CD4-positive, alpha-beta T cell (primary cell): ENCODE measurements at regions of chr3 and their contacts with region 1.

Region 1: GRCh38 chr3:46976326-46977190 is at the start of gene CCDC12:
- DNase-seq: peak; percentile 85 to 98 (median 89)
- ATAC-seq: peak; percentile 78
- H3K4me3 ChIP-seq: peak within 1 kb of the TSS; percentile 88
- H3K4me3 Mint-ChIP-seq: peak within 1 kb of the TSS; percentile 97
- H3K27ac ChIP-seq: peak within 1 kb of the TSS; percentile 84 to 95
- H3K27ac Mint-ChIP-seq: peak within 1 kb of the TSS; percentile 91
- H3K4me1 ChIP-seq: peaks cover 83% of the 10 kb centered on the region
- H3K4me1 Mint-ChIP-seq: peaks cover 74% of the 10 kb centered on the region
- H3K27me3 ChIP-seq: no peaks in the 10 kb centered on the region
- H3K27me3 Mint-ChIP-seq: no peaks in the 10 kb centered on the region
- CTCF ChIP-seq: no peak
- total RNA-seq, gene CCDC12: 57.5 to 59.5 TPM

Region 2: GRCh38 chr3:46947981-46948791 is 28.4 kb before region 1 on chr3:
- CTCF ChIA-PET with region 1: interaction called, 11 read pairs
- POLR2A ChIA-PET with region 1: interaction called, 10 read pairs
- intact Hi-C with region 1: loop called in 1 of 2 experiments (anchors 1 kb)
- DNase-seq: peak; percentile 51 to 94 (median 70)
- ATAC-seq: peak; percentile 77
- H3K4me3 ChIP-seq: peak overlapping the region; percentile 1
- H3K4me3 Mint-ChIP-seq: peak overlapping the region; percentile 59
- H3K27ac ChIP-seq: peak overlapping the region; percentile 64 to 86
- H3K27ac Mint-ChIP-seq: peak overlapping the region; percentile 92
- H3K4me1 ChIP-seq: peaks cover 93% of the 10 kb centered on the region
- H3K4me1 Mint-ChIP-seq: peaks cover 84% of the 10 kb centered on the region
- H3K27me3 ChIP-seq: no peaks in the 10 kb centered on the region
- H3K27me3 Mint-ChIP-seq: no peaks in the 10 kb centered on the region
- CTCF ChIP-seq: no peak

Region 3: GRCh38 chr3:46987743-46988401 is 11.3 kb after region 1 on chr3:
- CTCF ChIA-PET with region 1: no interaction called
- POLR2A ChIA-PET with region 1: interaction called, 22 read pairs
- intact Hi-C with region 1: loop called in 1 of 2 experiments (anchors 1 kb)
- DNase-seq: peak; percentile 79 to 96 (median 89)
- ATAC-seq: peak; percentile 98
- H3K4me3 ChIP-seq: peak overlapping the region; percentile 53
- H3K4me3 Mint-ChIP-seq: peak overlapping the region; percentile 87
- H3K27ac ChIP-seq: peak overlapping the region; percentile 59 to 64
- H3K27ac Mint-ChIP-seq: peak overlapping the region; percentile 93
- H3K4me1 ChIP-seq: peaks cover 86% of the 10 kb centered on the region
- H3K4me1 Mint-ChIP-seq: peaks cover 68% of the 10 kb centered on the region
- H3K27me3 ChIP-seq: no peaks in the 10 kb centered on the region
- H3K27me3 Mint-ChIP-seq: no peaks in the 10 kb centered on the region
- CTCF ChIP-seq: no peak

Region 4: GRCh38 chr3:47009225-47010110 is 32.9 kb after region 1 on chr3:
- CTCF ChIA-PET with region 1: no interaction called
- POLR2A ChIA-PET with region 1: interaction called, 15 read pairs
- intact Hi-C with region 1: no loop called
- DNase-seq: peak; percentile 30 to 85 (median 70)
- ATAC-seq: peak; percentile 88
- H3K4me3 ChIP-seq: peak overlapping the region; percentile 51
- H3K4me3 Mint-ChIP-seq: peak overlapping the region; percentile 71
- H3K27ac ChIP-seq: peak overlapping the region in 1 of 2 donors; percentile 50
- H3K27ac Mint-ChIP-seq: peak overlapping the region; percentile 59
- H3K4me1 ChIP-seq: peaks cover 10% of the 10 kb centered on the region
- H3K4me1 Mint-ChIP-seq: peaks cover 9% of the 10 kb centered on the region
- H3K27me3 ChIP-seq: no peaks in the 10 kb centered on the region
- H3K27me3 Mint-ChIP-seq: no peaks in the 10 kb centered on the region
- CTCF ChIP-seq: no peak

Region 5: DNA sequence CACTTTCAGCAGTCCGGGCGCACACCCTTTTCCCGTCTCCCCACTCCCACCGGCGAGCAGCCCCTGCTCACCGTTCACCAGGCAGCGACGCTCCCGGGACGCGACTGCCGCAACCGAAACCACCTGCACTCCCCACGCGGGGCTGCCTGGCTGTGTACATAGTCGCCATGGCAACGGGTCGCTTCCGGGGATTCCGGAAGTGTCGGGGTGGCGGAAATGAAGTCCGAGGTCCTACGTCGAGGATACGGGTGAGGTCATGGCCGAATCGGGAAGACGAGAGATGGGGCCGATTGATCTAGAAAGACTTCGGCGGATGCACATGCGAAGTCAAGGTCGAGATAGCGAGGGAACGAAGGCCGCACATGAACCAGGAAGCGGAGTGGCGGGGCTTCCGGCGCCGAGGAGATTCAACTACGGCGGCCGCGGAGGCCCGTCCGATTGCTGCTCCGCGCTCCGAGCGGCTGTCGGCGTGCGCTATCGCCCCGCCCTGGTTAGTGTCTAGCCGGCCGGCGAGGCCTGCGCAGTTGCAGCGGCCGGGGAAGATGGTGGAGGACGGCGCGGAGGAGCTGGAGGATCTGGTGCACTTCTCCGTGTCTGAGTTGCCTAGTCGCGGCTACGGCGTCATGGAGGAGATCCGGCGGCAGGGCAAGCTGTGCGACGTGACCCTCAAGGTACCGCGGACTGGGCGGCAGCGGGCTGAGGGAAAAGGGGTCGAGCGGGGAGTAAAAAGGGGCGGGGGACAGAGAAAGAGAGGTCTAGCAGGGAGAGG is 306.1 kb after region 1 on chr3 and contains the starts of genes KIF9 and KLHL18:
- CTCF ChIA-PET with region 1: no interaction called
- POLR2A ChIA-PET with region 1: no interaction called
- intact Hi-C with region 1: loop called in 1 of 2 experiments (anchors 5 kb)
- DNase-seq: peak; percentile 92 to 99 (median 95)
- ATAC-seq: peak; percentile 83
- H3K4me3 ChIP-seq: peak within 1 kb of the TSS; percentile 78
- H3K4me3 Mint-ChIP-seq: peak within 1 kb of the TSS; percentile 98
- H3K27ac ChIP-seq: peak within 1 kb of the TSS; percentile 95 to 98
- H3K27ac Mint-ChIP-seq: peak within 1 kb of the TSS; percentile 99
- H3K4me1 ChIP-seq: peaks cover 45% of the 10 kb centered on the region
- H3K4me1 Mint-ChIP-seq: peaks cover 42% of the 10 kb centered on the region
- H3K27me3 ChIP-seq: no peaks in the 10 kb centered on the region
- H3K27me3 Mint-ChIP-seq: no peaks in the 10 kb centered on the region
- CTCF ChIP-seq: no peak
- total RNA-seq, gene KIF9: 8.0 to 9.2 TPM
- total RNA-seq, gene KLHL18: 43.3 to 43.7 TPM

Region 6: DNA sequence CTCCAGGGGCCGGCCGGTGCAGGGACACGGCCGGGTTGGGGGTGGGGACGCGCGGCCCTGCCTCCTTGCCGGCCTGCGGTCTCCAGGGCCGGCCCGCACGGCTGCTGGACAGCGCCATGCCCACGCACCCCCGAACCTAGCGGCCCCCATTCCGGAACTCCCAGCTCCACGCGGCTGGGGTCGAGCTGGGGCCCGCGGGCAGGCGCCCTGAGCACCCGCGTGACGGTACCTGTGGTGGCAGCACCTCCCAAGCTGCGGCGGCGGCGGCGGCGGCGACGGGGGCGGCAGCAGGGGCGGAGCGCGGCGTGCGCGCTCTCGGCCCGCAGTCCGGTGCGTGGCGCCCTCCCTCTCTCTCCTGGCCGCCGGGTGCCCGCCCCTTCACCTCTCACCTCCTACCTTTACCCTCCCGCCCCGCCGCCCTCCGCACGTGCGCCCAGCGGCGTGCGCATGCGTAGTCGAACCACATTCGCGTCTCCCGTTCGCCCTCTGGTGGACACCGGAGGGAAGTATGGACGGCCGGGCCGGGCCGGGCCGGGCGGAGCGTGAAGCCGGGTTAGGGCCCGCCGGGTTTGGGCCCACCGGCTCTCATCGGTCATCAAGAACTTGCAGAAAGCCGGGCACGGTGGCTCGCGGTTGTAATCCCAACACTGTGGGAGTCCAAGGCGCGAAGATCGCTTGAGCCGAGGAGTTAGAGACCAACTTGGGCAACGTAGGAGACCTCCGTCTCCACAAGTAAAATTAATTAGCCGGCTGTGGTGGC is 499.2 kb after region 1 on chr3 and contains the start of gene SCAP:
- CTCF ChIA-PET with region 1: no interaction called
- POLR2A ChIA-PET with region 1: interaction called, 3 read pairs
- intact Hi-C with region 1: loop called in 1 of 2 experiments (anchors 5 kb)
- DNase-seq: peak; percentile 93 to 98 (median 96)
- ATAC-seq: peak; percentile 92
- H3K4me3 ChIP-seq: peak within 1 kb of the TSS; percentile 68
- H3K4me3 Mint-ChIP-seq: peak within 1 kb of the TSS; percentile 99
- H3K27ac ChIP-seq: peak within 1 kb of the TSS; percentile 73 to 74
- H3K27ac Mint-ChIP-seq: peak within 1 kb of the TSS; percentile 89
- H3K4me1 ChIP-seq: peaks cover 28% of the 10 kb centered on the region
- H3K4me1 Mint-ChIP-seq: peaks cover 44% of the 10 kb centered on the region
- H3K27me3 ChIP-seq: no peaks in the 10 kb centered on the region
- H3K27me3 Mint-ChIP-seq: no peaks in the 10 kb centered on the region
- CTCF ChIP-seq: peak; percentile 90
- total RNA-seq, gene SCAP: 58.3 to 60.3 TPM